ENCODE measurements at regions of chr5 and their contacts with region 1.

Region 1: GRCh38 chr5:179763215-179763945 is 30.4 kb upstream of the LTC4S start:
- DNase-seq: peak; percentile 88
- H3K4me3 Mint-ChIP-seq: peak overlapping the region; percentile 33
- H3K27ac Mint-ChIP-seq: peak overlapping the region; percentile 75
- H3K4me1 Mint-ChIP-seq: peaks cover 56% of the 10 kb centered on the region
- H3K27me3 Mint-ChIP-seq: no peaks in the 10 kb centered on the region
- CTCF ChIP-seq: peak; percentile 83

Region 2: GRCh38 chr5:179623003-179623880 is 140.1 kb before region 1 on chr5 and contains the start of gene HNRNPH1:
- CTCF ChIA-PET with region 1: interaction called, 3 read pairs
- POLR2A ChIA-PET with region 1: interaction called, 16 read pairs
- intact Hi-C with region 1: no loop called
- DNase-seq: peak; percentile 100
- H3K4me3 Mint-ChIP-seq: peak within 1 kb of the TSS; percentile 98
- H3K27ac Mint-ChIP-seq: peak within 1 kb of the TSS; percentile 99
- H3K4me1 Mint-ChIP-seq: peaks cover 46% of the 10 kb centered on the region
- H3K27me3 Mint-ChIP-seq: no peaks in the 10 kb centered on the region
- CTCF ChIP-seq: no peak
- total RNA-seq, gene HNRNPH1: 907 and 981 TPM in 2 replicates

Region 3: GRCh38 chr5:179749857-179750508 is 13.4 kb before region 1 on chr5:
- CTCF ChIA-PET with region 1: interaction called, 32 read pairs
- POLR2A ChIA-PET with region 1: interaction called, 5 read pairs
- intact Hi-C with region 1: no loop called
- DNase-seq: no peak
- H3K4me3 Mint-ChIP-seq: no peak overlapping the region
- H3K27ac Mint-ChIP-seq: no peak overlapping the region
- H3K4me1 Mint-ChIP-seq: peaks cover 21% of the 10 kb centered on the region
- H3K27me3 Mint-ChIP-seq: no peaks in the 10 kb centered on the region
- CTCF ChIP-seq: no peak

Region 4: DNA sequence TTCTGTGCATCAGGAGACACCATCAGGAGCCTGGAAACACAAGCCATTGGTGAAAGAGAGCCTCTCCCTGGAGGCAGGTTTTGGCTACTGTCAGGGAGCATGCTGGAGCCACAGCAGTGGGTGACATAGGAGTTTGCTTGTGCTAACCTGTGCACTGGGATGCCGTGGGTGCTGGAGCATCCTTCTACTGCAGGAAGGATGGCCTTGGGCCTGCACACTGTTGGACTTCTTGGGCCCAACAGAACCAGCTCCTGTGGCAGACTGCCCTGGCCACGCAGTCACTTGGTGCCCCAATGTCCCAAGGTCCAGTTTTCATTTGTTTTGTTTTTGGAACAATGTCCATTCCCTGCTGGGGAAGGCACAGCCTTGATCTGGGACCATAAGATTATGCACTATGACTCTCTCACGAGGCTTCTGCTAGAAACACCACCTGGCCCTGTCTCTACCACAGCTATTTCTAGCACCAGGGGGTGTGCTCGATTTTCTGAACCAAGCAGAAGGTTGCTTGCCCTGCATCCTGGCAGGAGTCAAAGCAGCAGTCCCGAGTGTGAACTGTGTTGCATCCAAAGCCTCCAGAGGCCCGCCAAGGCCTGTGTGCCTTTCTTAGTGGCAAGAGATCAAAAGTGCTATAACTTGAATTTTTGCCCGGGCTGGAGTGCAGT is 24.9 kb after region 1 on chr5:
- CTCF ChIA-PET with region 1: interaction called, 17 read pairs
- POLR2A ChIA-PET with region 1: interaction called, 37 read pairs
- intact Hi-C with region 1: no loop called
- DNase-seq: no peak
- H3K4me3 Mint-ChIP-seq: no peak overlapping the region
- H3K27ac Mint-ChIP-seq: no peak overlapping the region
- H3K4me1 Mint-ChIP-seq: no peaks in the 10 kb centered on the region
- H3K27me3 Mint-ChIP-seq: no peaks in the 10 kb centered on the region
- CTCF ChIP-seq: no peak

Region 5: GRCh38 chr5:179806250-179807222 is 43.2 kb after region 1 on chr5 and contains the start of gene MGAT4B:
- CTCF ChIA-PET with region 1: interaction called, 3 read pairs
- POLR2A ChIA-PET with region 1: interaction called, 16 read pairs
- intact Hi-C with region 1: no loop called
- DNase-seq: peak; percentile 87
- H3K4me3 Mint-ChIP-seq: peak within 1 kb of the TSS; percentile 82
- H3K27ac Mint-ChIP-seq: peak within 1 kb of the TSS; percentile 92
- H3K4me1 Mint-ChIP-seq: peaks cover 29% of the 10 kb centered on the region
- H3K27me3 Mint-ChIP-seq: no peaks in the 10 kb centered on the region
- CTCF ChIP-seq: no peak
- total RNA-seq, gene MGAT4B: 153 and 198 TPM in 2 replicates

Region 6: GRCh38 chr5:179858586-179859427 is 95.4 kb after region 1 on chr5 and contains the start of gene MRNIP:
- CTCF ChIA-PET with region 1: no interaction called
- POLR2A ChIA-PET with region 1: no interaction called
- intact Hi-C with region 1: loop called (anchors 1 kb)
- DNase-seq: peak; percentile 98
- H3K4me3 Mint-ChIP-seq: peak within 1 kb of the TSS; percentile 94
- H3K27ac Mint-ChIP-seq: peak within 1 kb of the TSS; percentile 83
- H3K4me1 Mint-ChIP-seq: peaks cover 11% of the 10 kb centered on the region
- H3K27me3 Mint-ChIP-seq: no peaks in the 10 kb centered on the region
- CTCF ChIP-seq: no peak
- total RNA-seq, gene MRNIP: 40.3 and 42.8 TPM in 2 replicates

Region 7: DNA sequence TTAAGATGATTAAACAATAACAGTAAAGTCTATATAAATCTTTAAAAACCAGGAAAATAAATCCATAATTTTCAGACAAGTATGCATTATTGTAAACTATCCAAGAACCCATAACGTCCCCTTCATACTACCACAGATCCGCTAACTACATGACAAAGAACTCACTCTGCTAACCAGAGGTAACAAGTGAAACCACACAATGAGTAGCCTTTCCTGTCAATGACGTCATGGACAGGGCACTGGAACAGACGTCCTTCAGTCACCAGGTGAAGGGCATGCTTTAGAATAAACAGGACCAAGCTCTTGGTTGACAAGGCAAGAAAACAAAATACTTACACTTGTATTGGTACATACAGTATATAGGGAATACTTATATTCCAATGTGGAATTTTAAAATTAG is 262.9 kb after region 1 on chr5:
- CTCF ChIA-PET with region 1: no interaction called
- POLR2A ChIA-PET with region 1: no interaction called
- intact Hi-C with region 1: no loop called
- DNase-seq: peak; percentile 84
- H3K4me3 Mint-ChIP-seq: no peak overlapping the region
- H3K27ac Mint-ChIP-seq: no peak overlapping the region
- H3K4me1 Mint-ChIP-seq: peaks cover 6% of the 10 kb centered on the region
- H3K27me3 Mint-ChIP-seq: no peaks in the 10 kb centered on the region
- CTCF ChIP-seq: no peak

Measured in MCF 10A (cell line).